ENCODE measurements at regions of chr2 and their contacts with region 1.

Region 1: DNA sequence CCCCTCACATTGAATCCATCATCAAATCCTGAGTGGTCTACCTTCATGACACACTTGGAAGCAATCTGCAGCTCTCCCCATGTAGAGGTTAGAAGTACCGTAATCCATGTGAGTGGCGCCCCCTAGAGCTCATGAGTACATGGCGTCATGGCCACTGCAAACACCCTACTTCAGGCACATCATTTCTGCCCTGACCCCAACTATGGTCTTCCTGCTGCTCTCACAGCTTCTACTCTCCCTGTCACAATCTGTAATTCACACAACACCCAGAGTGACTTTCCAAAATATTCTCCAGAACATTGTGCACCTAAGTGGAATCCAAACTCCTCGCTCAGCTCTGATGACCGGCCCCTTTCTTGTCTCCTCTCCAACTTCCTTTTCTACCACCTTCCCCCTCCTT is 141.9 kb downstream of the ANKRD44 start:
- DNase-seq: peak; percentile 87
- H3K4me3 ChIP-seq: no peak overlapping the region
- H3K27ac ChIP-seq: no peak overlapping the region
- H3K4me1 ChIP-seq: peaks cover 17% of the 10 kb centered on the region
- H3K27me3 ChIP-seq: no peaks in the 10 kb centered on the region
- CTCF ChIP-seq: peak; percentile 86

Region 2: GRCh38 chr2:195395351-195395750 is 1773.4 kb before region 1 on chr2:
- CTCF ChIA-PET with region 1: no interaction called
- POLR2A ChIA-PET with region 1: no interaction called
- intact Hi-C with region 1: no loop called
- DNase-seq: no peak
- H3K4me3 ChIP-seq: no peak overlapping the region
- H3K27ac ChIP-seq: no peak overlapping the region
- H3K4me1 ChIP-seq: peaks cover 11% of the 10 kb centered on the region
- H3K27me3 ChIP-seq: no peaks in the 10 kb centered on the region
- CTCF ChIP-seq: no peak

Region 3: DNA sequence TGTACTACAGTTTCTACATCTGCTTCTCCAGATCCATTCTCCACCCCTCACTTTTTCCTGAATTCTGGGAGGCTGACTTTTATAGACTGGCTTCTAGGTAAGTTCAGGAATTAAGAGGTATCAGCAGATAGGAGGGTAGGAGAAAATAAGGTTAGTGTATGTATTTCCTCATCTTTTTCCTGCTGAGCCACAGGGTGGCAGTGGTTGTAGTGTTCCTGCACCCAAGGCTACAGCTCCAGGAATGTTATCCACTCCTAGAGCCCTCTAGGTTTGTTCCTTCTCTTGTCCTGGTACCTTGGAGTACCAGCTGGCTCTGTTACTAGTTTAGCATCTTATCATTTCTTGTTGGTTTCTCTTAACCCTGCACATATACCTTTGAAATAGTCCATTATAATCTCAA is 318.8 kb before region 1 on chr2:
- CTCF ChIA-PET with region 1: no interaction called
- POLR2A ChIA-PET with region 1: no interaction called
- intact Hi-C with region 1: loop called (anchors 10 kb)
- DNase-seq: peak; percentile 54
- H3K4me3 ChIP-seq: no peak overlapping the region
- H3K27ac ChIP-seq: no peak overlapping the region
- H3K4me1 ChIP-seq: peaks cover 19% of the 10 kb centered on the region
- H3K27me3 ChIP-seq: no peaks in the 10 kb centered on the region
- CTCF ChIP-seq: peak; percentile 60

Region 4: DNA sequence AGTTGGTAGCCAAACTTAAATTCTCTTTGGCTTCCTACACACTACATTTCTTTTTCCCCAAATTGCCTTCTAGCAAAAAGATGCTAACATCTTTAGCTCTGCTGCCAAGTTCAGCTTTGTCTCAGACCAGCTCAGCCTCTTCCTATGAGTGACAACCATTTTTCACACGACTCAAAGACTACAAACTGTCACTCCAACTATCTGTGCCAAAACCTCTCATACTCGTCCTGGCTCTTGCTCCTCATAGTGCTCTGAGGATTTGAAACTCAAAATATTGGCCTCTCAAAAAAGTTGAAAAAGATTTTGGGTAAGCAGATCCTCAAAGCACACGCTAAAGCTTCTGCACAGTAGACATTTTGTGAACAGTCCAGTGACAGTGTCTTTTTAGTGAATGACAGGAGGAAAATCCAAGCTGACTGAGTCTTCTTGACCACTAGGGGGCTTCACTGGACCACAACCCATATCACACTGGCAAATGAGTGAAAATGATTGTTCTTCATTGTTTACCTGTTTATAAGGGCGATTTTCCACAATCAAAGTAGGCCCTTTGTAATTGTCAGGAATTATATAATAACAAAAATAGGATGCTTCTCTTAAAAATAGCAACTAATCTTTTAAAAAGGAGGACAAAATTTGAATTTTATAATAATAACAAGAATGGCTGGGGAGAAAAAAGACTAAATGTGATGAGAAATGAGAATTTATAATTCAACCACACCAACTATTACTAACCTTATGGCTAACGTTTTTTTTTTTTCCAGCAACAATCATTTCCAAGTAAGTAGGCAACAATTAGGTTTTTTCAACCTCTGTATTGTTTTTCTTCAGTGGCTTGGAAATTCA is 156.7 kb before region 1 on chr2:
- CTCF ChIA-PET with region 1: interaction called, 9 read pairs
- POLR2A ChIA-PET with region 1: no interaction called
- intact Hi-C with region 1: loop called (anchors 1 kb)
- DNase-seq: peak; percentile 83
- H3K4me3 ChIP-seq: no peak overlapping the region
- H3K27ac ChIP-seq: no peak overlapping the region
- H3K4me1 ChIP-seq: peaks cover 43% of the 10 kb centered on the region
- H3K27me3 ChIP-seq: no peaks in the 10 kb centered on the region
- CTCF ChIP-seq: peak; percentile 95

Region 5: DNA sequence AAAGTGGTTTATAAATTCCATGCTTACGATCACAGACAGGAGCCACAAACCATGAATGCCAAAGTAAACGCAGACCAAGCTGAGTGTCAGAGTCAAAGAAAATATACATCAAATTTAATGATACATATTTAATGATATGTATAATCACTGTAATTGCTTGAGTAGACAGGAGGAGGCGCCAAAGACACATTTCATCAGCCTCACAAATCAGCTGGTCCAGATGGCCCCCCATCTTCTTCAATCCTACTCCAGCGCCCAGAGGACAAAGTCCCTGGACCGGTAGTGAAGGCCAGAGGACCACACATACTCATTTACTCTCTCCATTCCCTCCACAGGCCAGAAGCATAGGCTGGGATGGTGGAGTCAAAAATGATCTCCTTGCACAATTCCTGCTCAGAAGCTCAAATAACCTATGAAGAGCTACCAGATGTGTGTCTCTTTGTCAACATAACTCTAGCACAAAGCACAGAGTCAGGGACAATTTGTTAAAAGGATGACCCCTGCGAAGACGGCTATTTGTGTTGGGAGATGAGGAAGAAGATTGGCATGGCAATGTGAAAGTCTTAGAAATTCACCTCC is 92.9 kb before region 1 on chr2:
- CTCF ChIA-PET with region 1: no interaction called
- POLR2A ChIA-PET with region 1: no interaction called
- intact Hi-C with region 1: loop called (anchors 5 kb)
- DNase-seq: no peak
- H3K4me3 ChIP-seq: no peak overlapping the region
- H3K27ac ChIP-seq: peak overlapping the region; percentile 10
- H3K4me1 ChIP-seq: peaks cover 74% of the 10 kb centered on the region
- H3K27me3 ChIP-seq: no peaks in the 10 kb centered on the region
- CTCF ChIP-seq: peak; percentile 59

Region 6: DNA sequence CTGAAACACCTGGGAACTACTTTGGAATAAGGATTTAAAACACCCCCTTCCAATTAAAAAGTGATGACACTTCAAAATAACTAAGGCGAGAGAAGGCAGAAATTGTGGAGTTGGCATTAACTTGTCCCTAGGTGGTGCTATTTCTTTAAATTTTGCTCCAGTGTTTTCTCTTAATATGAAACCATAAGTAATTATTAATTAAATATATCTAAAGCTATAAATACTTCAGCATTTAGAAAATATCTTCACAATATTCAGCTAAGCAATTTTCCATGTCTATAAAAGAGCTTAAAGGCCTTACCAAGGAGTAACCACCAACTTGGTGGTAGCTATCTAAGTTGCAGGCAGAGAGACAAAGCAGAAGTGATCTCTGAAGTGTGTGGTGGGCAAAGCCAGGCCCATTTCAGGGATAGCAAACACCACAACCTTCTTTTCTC is 55.4 kb before region 1 on chr2:
- CTCF ChIA-PET with region 1: interaction called, 20 read pairs
- POLR2A ChIA-PET with region 1: no interaction called
- intact Hi-C with region 1: no loop called
- DNase-seq: peak; percentile 60
- H3K4me3 ChIP-seq: no peak overlapping the region
- H3K27ac ChIP-seq: peak overlapping the region; percentile 18
- H3K4me1 ChIP-seq: peaks cover 7% of the 10 kb centered on the region
- H3K27me3 ChIP-seq: no peaks in the 10 kb centered on the region
- CTCF ChIP-seq: peak; percentile 77